ENCODE measurements at regions of chr9 and their contacts with region 1.

Region 1: DNA sequence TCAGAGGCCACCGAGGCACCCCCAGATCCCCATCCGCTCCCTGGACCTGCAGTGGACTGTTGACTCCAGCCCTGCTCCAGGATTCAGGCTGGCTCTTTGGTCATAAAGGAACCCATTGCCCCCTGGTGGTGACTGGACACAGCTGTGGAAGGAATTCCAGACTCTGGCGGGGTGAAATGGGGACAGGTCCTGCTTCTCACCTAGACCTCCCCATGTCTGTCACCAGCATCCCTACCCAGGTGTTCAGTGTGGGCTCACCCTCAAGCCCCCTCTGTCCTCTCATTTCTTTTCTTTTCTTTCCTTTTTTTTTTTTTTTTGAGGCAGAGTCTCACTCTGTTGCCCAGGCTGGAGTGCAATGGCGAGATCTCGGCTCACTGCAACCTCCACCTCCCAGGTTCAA is 25.5 kb upstream of the STXBP1 start:
- DNase-seq: peak; percentile 32 to 76 (median 50)
- H3K4me3 ChIP-seq: no peak overlapping the region
- H3K4me3 Mint-ChIP-seq: no peak overlapping the region
- H3K27ac ChIP-seq: no peak overlapping the region
- H3K27ac Mint-ChIP-seq: no peak overlapping the region
- H3K4me1 ChIP-seq: no peaks in the 10 kb centered on the region
- H3K4me1 Mint-ChIP-seq: no peaks in the 10 kb centered on the region
- H3K27me3 ChIP-seq: no peaks in the 10 kb centered on the region
- H3K27me3 Mint-ChIP-seq: peaks cover 3 to 16% of the 10 kb centered on the region in 2 donors

Region 2: DNA sequence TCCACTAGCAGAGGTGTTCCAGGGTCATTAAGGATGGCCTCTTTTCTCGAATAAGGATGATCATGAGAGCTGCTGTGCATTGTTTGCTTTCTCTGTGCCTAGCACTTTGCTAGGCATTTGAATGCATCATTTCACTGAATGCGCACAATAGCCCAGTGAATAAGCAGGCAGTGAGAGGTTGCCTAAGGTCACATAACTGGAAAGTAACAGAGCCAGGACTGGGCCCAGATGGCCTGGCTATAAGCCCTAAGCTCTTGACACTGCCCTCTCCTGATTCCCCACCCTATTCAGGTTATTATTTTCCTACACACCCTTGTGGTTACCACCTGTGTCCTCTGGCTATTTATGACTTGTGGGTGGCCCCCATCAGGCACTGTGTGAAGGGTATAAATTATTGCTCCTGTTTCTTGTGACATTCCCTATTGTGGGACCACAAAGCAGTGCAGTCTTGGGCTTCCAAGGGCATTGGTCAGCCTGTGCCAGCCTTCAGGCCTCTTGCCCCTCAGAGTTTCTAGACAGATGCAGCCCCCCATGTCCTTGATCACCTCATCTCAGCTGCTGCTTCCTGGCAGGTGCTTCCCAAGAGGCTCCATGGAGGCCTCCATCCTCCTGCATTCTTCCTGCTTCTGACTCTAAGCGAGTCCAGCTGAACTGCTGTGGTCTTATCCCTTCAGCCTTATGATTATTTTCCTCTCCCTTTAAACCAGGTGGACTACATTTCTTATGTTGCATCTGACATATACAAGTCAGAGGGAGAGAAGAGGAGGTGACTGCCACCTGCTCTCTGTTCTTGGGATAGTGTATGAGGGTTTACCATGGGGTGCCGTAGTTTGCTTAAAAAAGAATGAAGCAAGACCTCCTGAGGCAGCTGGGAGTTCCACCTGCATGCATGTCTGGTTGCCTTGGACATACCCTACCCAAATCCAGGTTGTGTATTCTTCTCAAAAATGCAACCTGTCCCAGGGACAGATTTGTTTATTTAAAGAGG is 511.7 kb before region 1 on chr9:
- CTCF ChIA-PET with region 1: no interaction called
- POLR2A ChIA-PET with region 1: no interaction called
- DNase-seq: no peak
- H3K4me3 ChIP-seq: no peak overlapping the region
- H3K4me3 Mint-ChIP-seq: no peak overlapping the region
- H3K27ac ChIP-seq: no peak overlapping the region
- H3K27ac Mint-ChIP-seq: peak overlapping the region in 1 of 8 donors; percentile 55
- H3K4me1 ChIP-seq: no peaks in the 10 kb centered on the region
- H3K4me1 Mint-ChIP-seq: peaks cover 0 to 8% (median 0%) of the 10 kb centered on the region in 3 donors
- H3K27me3 ChIP-seq: no peaks in the 10 kb centered on the region
- H3K27me3 Mint-ChIP-seq: peaks cover 0 to 4% of the 10 kb centered on the region in 2 donors

Region 3: DNA sequence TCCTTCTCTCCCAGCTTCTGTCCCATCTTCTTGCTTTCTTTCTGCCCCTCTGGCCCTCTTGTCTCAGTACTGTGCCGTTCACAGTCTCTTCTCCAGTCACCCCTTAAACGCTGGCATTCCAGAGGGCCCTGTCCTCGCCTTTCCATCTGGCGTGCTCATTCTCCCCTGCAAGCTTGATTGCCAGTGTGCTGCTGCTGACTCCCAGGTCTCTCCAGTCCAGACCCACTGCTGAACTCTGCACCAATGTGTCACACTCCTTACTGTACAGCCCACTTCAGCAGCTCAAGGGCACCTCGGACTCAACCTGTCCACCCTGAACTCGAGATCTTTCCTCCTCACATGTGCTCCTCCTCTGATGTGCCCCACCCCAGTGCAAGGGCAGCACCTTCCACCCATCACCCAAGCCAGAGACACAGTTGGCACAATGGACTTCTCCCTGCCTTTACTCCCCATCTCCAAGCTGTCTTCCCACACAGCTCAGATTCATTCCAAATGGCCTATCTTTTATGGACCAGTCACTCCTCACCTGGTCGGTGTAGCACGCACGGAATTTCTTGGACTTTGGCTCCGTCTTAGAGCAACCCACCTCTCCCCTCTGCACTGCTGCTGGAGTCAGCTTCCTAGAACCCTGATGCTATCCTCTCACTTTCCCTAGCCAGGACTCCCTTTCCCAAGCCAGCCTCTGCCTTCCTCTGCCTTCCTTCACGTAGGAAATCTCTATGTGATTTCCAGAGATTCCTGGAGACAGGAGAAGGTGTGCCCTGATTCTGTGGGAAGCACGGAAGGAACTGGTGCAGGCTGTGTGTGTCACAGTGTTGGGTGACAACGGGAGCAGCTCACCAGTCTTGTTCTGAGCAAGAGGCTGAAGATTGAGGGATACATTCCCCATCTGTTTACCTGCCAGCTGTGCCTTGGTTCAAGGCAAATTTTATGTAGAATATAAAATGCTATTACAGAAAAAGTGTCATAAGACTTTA is 215.6 kb before region 1 on chr9:
- CTCF ChIA-PET with region 1: no interaction called
- POLR2A ChIA-PET with region 1: no interaction called
- DNase-seq: no peak
- H3K4me3 ChIP-seq: no peak overlapping the region
- H3K4me3 Mint-ChIP-seq: no peak overlapping the region
- H3K27ac ChIP-seq: no peak overlapping the region
- H3K27ac Mint-ChIP-seq: peak overlapping the region in 1 of 8 donors; percentile 20
- H3K4me1 ChIP-seq: no peaks in the 10 kb centered on the region
- H3K4me1 Mint-ChIP-seq: no peaks in the 10 kb centered on the region
- H3K27me3 ChIP-seq: peaks cover 12% of the 10 kb centered on the region
- H3K27me3 Mint-ChIP-seq: peaks cover 40 to 70% of the 10 kb centered on the region in 2 donors

Region 4: DNA sequence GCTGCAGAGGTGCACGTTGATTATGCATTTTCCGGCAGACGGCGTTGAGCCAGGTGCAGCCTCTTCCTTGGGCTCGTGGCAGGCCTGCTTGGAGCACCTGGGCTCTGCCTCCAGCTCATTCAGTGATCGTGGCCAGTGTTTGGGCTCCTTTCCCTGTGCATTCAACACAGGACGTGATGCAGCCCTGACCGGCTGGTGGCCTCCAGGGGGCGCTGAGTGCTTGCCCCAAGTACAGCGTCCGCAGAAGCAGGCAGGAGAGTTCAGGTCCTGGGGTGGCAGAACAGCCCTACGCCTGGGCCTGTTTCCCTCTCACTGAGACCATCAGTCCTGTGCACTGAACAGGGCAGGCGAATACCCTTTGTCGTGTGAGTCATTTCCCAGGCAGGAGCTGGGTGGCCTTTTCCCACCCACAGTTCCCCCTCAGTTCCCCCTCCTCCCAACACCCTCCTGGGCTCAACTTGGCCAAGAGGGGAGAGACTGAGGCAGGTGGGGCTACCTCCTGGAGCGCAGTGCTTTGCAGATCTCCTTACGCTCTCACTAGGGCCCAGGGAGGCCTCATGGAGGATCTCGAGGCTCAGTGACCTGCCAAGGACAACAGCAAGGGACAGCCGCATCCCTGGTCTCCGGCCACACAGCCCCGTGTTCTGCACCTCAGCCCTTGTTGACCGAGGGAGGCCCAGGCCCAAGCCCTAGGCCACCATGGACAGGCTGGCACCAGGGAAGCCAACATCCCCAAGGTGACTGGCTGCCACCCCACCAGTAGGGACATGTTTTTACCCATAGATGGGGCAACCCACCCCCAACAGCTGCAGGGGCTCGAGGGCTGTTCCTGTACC is 82.4 kb before region 1 on chr9:
- CTCF ChIA-PET with region 1: interaction called, 23 read pairs
- POLR2A ChIA-PET with region 1: no interaction called
- DNase-seq: peak; percentile 63 to 84 (median 69)
- H3K4me3 ChIP-seq: no peak overlapping the region
- H3K4me3 Mint-ChIP-seq: no peak overlapping the region
- H3K27ac ChIP-seq: no peak overlapping the region
- H3K27ac Mint-ChIP-seq: peak overlapping the region in 2 of 8 donors; percentile 23 to 61
- H3K4me1 ChIP-seq: no peaks in the 10 kb centered on the region
- H3K4me1 Mint-ChIP-seq: no peaks in the 10 kb centered on the region
- H3K27me3 ChIP-seq: no peaks in the 10 kb centered on the region
- H3K27me3 Mint-ChIP-seq: no peaks in the 10 kb centered on the region

Region 5: DNA sequence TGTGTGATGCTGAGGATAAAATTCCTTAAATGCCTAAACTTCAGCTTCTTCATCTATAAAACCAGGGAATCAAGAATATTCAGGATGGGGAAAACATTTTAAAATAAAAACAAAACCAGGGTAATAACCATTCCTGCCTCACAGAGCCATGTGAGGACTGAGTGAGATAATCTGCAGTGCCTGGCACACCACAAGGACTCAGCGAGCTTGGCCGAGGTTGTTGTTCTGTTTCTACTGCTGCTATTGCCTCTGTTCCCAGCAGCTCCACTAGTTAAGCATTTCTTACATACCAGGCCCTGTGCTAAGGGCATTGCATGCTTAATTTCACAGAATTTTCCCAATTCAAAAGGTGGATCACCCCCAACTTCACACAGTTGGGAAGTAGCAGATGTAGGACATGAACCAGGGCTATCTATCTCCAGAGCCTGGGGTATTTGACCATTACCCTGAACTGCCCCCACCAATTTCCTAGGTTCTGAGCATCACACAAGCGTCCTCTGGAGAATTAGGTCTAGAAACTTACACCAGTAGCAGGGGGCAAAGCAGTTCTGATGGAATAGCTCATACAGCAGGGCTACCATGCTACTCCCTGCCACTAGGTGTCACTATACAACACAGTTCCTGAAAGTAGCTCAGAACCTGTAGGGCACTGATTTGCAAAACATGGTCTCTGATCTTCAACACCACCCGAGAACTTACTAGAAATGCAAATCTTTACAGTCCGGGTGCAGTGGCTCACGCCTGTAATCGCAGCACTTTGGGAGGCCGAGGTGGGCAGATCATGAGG is 60.9 kb before region 1 on chr9:
- CTCF ChIA-PET with region 1: interaction called, 22 read pairs
- POLR2A ChIA-PET with region 1: no interaction called
- DNase-seq: peak in 2 of 5 donors; percentile 16 to 33
- H3K4me3 ChIP-seq: no peak overlapping the region
- H3K4me3 Mint-ChIP-seq: no peak overlapping the region
- H3K27ac ChIP-seq: no peak overlapping the region
- H3K27ac Mint-ChIP-seq: no peak overlapping the region
- H3K4me1 ChIP-seq: no peaks in the 10 kb centered on the region
- H3K4me1 Mint-ChIP-seq: no peaks in the 10 kb centered on the region
- H3K27me3 ChIP-seq: no peaks in the 10 kb centered on the region
- H3K27me3 Mint-ChIP-seq: peaks cover 0 to 1% of the 10 kb centered on the region in 2 donors

Measured in CD8-positive, alpha-beta memory T cell (primary cell).